ENCODE measurements at regions of chr2 and their contacts with region 1.

Region 1: DNA sequence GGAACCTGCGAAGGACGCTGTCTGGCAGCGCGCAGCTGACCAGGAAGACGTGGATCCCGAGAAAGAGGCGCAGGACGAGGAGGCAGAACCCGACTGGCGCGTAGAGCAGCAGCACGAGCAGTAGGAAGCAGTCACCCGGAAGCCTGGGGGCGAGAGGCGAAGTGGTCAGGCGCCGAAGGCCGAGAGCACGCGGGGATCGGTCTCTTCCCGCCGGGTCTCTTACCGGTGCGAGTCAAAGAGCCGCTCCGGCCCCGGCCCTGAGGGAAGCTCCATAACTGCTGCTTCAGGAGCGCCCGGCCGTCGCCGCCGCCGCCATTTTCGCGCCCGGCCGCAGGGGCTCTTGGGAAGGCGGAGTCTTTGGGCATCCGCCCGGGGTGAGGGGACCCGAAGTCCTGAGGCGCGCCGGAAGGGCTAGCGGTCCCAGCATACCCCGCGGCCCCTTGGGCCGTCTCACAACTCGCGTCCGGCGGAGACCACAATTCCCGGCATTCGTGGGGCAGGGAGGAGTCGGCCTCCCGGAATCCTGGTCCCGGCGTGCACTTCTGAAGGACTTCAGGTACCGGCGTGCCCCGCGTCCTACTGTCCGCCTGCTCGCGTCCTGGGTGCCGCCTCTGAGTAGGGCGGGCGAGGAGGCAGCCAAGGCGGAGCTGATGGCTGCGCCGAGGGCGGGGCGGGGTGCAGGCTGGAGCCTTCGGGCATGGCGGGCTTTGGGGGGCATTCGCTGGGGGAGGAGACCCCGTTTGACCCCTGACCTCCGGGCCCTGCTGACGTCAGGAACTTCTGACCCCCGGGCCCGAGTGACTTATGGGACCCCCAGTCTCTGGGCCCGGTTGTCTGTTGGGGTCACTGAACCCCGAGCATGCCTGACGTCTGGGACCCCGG is at the starts of genes AUP1 and HTRA2:
- DNase-seq: peak; percentile 98
- ATAC-seq: peak; percentile 90
- H3K4me3 Mint-ChIP-seq: peak within 1 kb of the TSS; percentile 100
- H3K27ac Mint-ChIP-seq: peak within 1 kb of the TSS; percentile 97
- H3K4me1 Mint-ChIP-seq: peaks cover 46% of the 10 kb centered on the region
- H3K27me3 Mint-ChIP-seq: no peaks in the 10 kb centered on the region
- total RNA-seq, gene AUP1: 140 to 158 TPM
- total RNA-seq, gene HTRA2: 52.2 to 87.2 TPM

Region 2: DNA sequence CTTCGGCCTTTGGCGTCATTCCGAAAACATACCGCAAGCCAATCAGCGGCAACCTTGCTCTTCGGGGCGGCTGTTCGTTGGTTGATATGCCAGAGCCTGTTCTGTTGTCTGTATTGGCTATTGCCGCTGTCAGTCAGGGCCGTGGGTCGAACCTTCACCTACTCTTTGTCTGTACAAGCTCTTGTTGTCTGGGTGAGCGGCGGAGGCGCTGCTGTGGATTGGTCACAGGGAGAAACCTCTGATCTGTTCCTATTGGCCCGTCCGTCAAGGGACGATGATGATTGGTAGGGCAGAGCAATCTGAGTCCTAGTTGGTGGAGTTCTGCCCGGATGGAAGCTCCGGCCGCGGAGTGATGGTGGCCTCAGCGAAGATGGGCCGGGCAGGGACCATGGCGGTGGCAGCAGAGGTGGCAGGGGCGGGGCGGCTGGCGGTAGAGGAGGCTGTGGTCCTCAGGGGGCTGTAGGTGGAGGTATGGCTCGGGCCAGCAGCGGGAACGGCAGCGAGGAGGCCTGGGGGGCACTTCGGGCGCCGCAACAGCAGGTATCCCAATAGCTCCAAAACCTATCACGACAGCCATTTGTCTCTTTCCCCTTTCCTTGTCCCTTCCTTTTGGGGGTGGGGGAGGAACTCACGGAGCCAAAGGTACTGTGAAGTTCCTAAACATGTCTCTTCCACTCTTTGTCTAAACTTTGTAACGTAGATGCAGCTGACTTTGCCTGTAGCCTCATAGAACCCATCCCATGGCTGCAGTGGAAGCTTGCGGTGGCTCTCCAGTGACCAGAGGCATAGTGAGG is 71.3 kb before region 1 on chr2 and contains the start of gene WBP1:
- CTCF ChIA-PET with region 1: interaction called, 27 read pairs
- DNase-seq: peak; percentile 100
- ATAC-seq: peak; percentile 86
- H3K4me3 Mint-ChIP-seq: peak within 1 kb of the TSS; percentile 94
- H3K27ac Mint-ChIP-seq: peak within 1 kb of the TSS; percentile 95
- H3K4me1 Mint-ChIP-seq: peaks cover 51% of the 10 kb centered on the region
- H3K27me3 Mint-ChIP-seq: no peaks in the 10 kb centered on the region
- total RNA-seq, gene WBP1: 40.5 to 46.8 TPM

Region 3: DNA sequence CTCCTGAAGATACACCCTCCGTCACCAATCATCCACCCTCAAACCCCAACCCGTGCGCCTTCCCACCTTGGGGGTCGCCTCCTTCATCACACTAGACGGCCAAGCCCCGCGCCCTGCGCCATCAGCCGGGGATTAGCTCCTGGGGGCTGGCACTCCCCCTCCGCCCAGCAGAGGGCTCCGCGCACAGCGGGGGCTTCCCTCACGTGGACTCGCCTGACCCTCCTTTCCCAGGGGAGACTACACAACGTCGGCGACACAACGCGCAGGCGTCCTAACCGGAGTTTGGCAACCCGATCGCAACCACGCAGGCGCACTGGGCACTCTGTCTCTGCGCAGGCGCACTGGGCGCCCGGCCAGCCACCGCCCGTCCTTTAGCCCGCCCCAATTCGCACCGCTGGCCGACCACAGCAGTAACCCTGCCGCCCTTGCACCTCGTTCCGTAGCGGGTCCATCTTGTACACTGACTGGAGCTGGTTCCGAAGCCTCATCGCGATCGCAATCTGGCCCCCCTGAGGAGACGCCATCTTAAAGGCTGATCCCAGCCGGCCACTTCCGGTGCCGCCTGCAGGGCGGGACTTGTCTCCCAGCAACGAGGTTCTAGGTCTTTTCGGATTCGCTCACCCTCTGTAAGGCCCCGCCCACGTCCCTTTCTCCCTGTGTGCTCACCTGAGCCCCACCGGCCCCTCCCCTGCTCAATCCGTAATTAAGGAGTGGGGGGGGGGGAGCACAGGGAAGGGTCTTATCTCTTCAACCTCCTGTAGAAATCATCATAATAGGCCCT is 22.3 kb before region 1 on chr2 and contains the start of gene PCGF1:
- CTCF ChIA-PET with region 1: interaction called, 39 read pairs
- DNase-seq: peak; percentile 99
- ATAC-seq: peak; percentile 88
- H3K4me3 Mint-ChIP-seq: peak within 1 kb of the TSS; percentile 90
- H3K27ac Mint-ChIP-seq: peak within 1 kb of the TSS; percentile 99
- H3K4me1 Mint-ChIP-seq: peaks cover 59% of the 10 kb centered on the region
- H3K27me3 Mint-ChIP-seq: peaks cover 24% of the 10 kb centered on the region
- total RNA-seq, gene PCGF1: 15.5 to 34.0 TPM

Region 4: GRCh38 chr2:74515981-74516633 is 13.5 kb before region 1 on chr2:
- CTCF ChIA-PET with region 1: interaction called, 12 read pairs
- DNase-seq: peak; percentile 83
- ATAC-seq: peak; percentile 82
- H3K4me3 Mint-ChIP-seq: peak overlapping the region; percentile 62
- H3K27ac Mint-ChIP-seq: no peak overlapping the region
- H3K4me1 Mint-ChIP-seq: peaks cover 32% of the 10 kb centered on the region
- H3K27me3 Mint-ChIP-seq: peaks cover 86% of the 10 kb centered on the region

Region 5: GRCh38 chr2:74553892-74554645 is 24.5 kb after region 1 on chr2 and contains the start of gene LOXL3:
- CTCF ChIA-PET with region 1: interaction called, 20 read pairs
- DNase-seq: peak; percentile 86
- ATAC-seq: peak; percentile 64
- H3K4me3 Mint-ChIP-seq: peak within 1 kb of the TSS; percentile 91
- H3K27ac Mint-ChIP-seq: peak within 1 kb of the TSS; percentile 96
- H3K4me1 Mint-ChIP-seq: peaks cover 39% of the 10 kb centered on the region
- H3K27me3 Mint-ChIP-seq: peaks cover 22% of the 10 kb centered on the region
- total RNA-seq, gene LOXL3: 0.76 to 1.8 TPM

Region 6: DNA sequence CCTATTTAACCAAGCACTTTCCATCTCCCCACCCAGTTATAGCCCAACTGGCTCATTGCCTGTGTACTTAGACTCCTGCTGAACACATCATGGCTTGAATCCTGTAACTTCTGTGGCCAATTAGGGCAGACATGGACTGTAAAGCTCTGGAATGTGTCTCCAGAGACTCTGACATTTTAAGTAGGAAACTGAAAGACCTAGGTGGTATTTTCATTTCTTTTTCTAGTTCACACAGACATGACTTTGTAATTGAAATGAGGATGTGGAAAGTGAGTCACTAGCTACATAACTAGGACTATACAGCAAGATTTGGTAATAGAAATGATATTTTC is 37.1 kb after region 1 on chr2:
- CTCF ChIA-PET with region 1: interaction called, 16 read pairs
- DNase-seq: no peak
- ATAC-seq: no peak
- H3K4me3 Mint-ChIP-seq: no peak overlapping the region
- H3K27ac Mint-ChIP-seq: peak overlapping the region; percentile 75
- H3K4me1 Mint-ChIP-seq: peaks cover 38% of the 10 kb centered on the region
- H3K27me3 Mint-ChIP-seq: peaks cover 10% of the 10 kb centered on the region